ENCODE measurements at regions of chr20 and their contacts with region 1.

Region 1: DNA sequence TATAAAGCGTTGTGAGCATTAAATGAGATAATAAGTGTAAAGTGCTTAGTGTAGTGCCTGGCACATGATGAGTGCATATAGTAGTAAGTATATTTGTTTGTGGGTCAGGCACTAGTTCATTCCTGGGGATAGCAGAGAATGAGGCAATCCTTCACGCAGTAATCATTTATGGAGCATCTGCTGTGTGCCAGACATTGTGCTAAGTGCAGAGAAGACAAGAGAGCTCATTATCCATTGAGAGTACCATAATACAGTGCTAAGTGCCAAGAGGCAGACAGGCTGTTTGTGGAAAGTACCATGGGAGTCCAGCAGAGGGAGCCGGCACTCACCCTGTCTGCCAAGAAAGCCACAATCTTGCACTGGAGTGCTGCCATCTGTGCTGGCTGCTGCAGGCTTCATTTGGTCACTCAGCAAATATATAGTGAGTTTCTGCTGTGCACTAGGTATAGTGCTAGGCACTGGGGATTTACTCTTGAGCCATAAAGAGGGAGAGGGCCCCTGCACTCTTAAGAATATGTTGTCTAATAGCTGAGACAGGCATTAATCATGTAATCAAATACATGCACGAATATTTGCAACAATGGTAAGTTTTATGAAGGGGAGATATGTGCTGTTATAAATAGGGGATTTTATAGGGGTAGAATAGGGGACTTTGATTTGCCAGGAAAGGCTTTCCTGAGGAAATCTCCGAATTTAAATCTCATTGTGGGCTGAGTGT is 12.9 kb upstream of the MROH8 start:
- DNase-seq: peak; percentile 80 to 93 (median 92)
- H3K4me3 ChIP-seq: no peak overlapping the region
- H3K27ac ChIP-seq: no peak overlapping the region
- H3K4me1 ChIP-seq: peaks cover 12 to 70% (median 52%) of the 10 kb centered on the region in 4 experiments
- H3K27me3 ChIP-seq: no peaks in the 10 kb centered on the region

Region 2: GRCh38 chr20:37108676-37109075 is 83.6 kb before region 1 on chr20:
- CTCF ChIA-PET with region 1: no interaction called
- POLR2A ChIA-PET with region 1: no interaction called
- DNase-seq: no peak
- H3K4me3 ChIP-seq: no peak overlapping the region
- H3K27ac ChIP-seq: no peak overlapping the region
- H3K4me1 ChIP-seq: no peaks in the 10 kb centered on the region
- H3K27me3 ChIP-seq: no peaks in the 10 kb centered on the region

Region 3: GRCh38 chr20:37123441-37123840 is 68.9 kb before region 1 on chr20:
- CTCF ChIA-PET with region 1: no interaction called
- POLR2A ChIA-PET with region 1: no interaction called
- DNase-seq: no peak
- H3K4me3 ChIP-seq: no peak overlapping the region
- H3K27ac ChIP-seq: no peak overlapping the region
- H3K4me1 ChIP-seq: no peaks in the 10 kb centered on the region
- H3K27me3 ChIP-seq: no peaks in the 10 kb centered on the region

Region 4: DNA sequence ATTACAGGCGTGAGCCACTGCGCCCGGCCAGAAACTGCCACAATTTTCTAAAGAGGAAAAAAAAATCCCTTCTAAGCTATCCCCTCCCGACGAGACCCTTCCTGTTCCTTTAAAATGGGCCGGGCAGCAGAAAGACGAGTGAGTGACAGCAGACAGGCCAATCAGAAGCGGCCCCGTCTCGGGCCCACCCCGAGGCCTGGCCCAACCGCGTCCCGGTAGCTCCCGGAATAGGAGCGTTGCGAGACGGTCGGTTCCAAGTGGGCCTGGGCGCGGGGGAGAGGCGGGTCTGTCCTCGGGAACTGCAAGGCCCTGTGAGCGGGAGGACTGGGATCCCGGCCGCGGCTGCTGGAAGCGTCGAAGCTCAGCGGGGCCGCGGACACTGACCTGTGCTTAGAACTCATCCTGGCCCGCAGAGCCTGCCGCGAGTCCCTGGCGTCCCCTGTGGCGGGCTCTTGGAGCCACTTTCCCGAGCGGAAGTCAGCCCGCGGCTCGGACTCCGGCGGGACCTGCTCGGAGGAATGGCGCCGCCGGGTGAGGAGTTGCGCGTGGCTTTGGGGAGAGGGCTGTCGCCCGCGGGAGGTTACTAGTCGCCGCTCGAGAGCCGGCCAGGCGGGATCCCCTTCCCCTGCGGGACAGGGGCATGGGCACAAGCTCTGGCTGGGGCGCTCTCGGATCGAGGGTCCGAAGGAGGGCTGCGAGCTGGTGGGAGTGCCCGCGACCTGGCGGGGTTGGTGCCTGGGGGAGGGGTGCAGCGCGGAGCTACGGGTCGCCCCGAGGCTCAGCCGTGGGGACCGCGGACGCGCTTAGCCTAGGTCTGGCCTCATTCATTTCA is 13.2 kb before region 1 on chr20 and contains the starts of genes MROH8 and RPN2:
- CTCF ChIA-PET with region 1: interaction called, 58 read pairs
- POLR2A ChIA-PET with region 1: interaction called, 7 read pairs
- DNase-seq: peak; percentile 96 to 97 (median 97)
- H3K4me3 ChIP-seq: peak within 1 kb of the TSS; percentile 81 to 98 (median 95)
- H3K27ac ChIP-seq: peak within 1 kb of the TSS; percentile 95 to 99
- H3K4me1 ChIP-seq: peaks cover 8 to 22% (median 14%) of the 10 kb centered on the region in 4 experiments
- H3K27me3 ChIP-seq: no peaks in the 10 kb centered on the region

Region 5: GRCh38 chr20:37202267-37202943 is 10.1 kb after region 1 on chr20:
- CTCF ChIA-PET with region 1: interaction called, 18 read pairs
- POLR2A ChIA-PET with region 1: no interaction called
- DNase-seq: peak; percentile 34 to 62 (median 51)
- H3K4me3 ChIP-seq: no peak overlapping the region
- H3K27ac ChIP-seq: no peak overlapping the region
- H3K4me1 ChIP-seq: no peaks in the 10 kb centered on the region
- H3K27me3 ChIP-seq: no peaks in the 10 kb centered on the region

Region 6: GRCh38 chr20:37527638-37528441 is 335.5 kb after region 1 on chr20 and contains the start of gene BLCAP:
- CTCF ChIA-PET with region 1: interaction called, 35 read pairs
- POLR2A ChIA-PET with region 1: no interaction called
- DNase-seq: peak; percentile 88 to 92 (median 92)
- H3K4me3 ChIP-seq: peak within 1 kb of the TSS; percentile 75 to 97 (median 94)
- H3K27ac ChIP-seq: peak within 1 kb of the TSS; percentile 99 to 100
- H3K4me1 ChIP-seq: peaks cover 9 to 41% (median 33%) of the 10 kb centered on the region in 4 experiments
- H3K27me3 ChIP-seq: no peaks in the 10 kb centered on the region

Region 7: DNA sequence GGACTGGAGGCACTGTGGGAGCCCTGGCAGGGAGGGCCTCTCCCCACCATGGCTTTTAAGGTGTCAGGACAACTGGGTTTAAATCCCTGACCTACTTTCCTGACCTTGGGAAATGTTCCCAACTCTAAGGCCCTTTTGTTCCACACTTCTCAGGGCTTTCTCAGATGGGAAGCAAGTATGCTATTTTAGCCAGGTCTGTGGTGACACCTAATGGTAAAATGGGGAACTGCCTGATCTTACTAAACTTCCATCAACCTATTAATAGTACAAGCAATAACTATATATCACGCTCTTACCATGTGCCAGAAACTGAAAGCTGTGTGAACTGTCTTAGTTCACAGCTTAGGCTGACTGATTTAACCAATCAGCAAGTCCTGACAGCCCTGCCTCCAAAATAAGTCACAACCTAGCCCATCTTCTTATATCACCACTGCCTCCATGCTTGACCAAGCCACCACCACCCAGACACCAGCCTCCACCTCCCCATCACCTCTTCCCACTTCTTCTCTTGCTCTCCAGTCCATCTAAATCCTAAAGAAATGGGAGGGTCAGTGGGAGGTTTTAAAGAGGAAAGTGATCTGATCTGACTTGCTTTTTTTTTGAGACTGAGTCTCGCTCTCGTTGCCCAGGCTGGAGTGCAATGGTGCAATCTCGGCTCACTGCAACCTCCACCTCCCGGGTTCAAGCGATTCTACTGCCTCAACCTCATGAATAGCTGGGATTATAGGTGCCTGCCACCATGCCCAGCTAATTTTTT is 342.3 kb after region 1 on chr20:
- CTCF ChIA-PET with region 1: interaction called, 35 read pairs
- POLR2A ChIA-PET with region 1: no interaction called
- DNase-seq: peak; percentile 80 to 90 (median 88)
- H3K4me3 ChIP-seq: no peak overlapping the region
- H3K27ac ChIP-seq: no peak overlapping the region
- H3K4me1 ChIP-seq: peaks cover 0 to 12% (median under 1%) of the 10 kb centered on the region in 4 experiments
- H3K27me3 ChIP-seq: no peaks in the 10 kb centered on the region